ENCODE measurements at regions of chr2 and their contacts with region 1.

Region 1: GRCh38 chr2:30711646-30712085 is 95.6 kb downstream of the CAPN13 start:
- DNase-seq: peak; percentile 83 to 89 (median 89)
- H3K4me3 ChIP-seq: no peak overlapping the region
- H3K4me3 Mint-ChIP-seq: no peak overlapping the region
- H3K27ac ChIP-seq: no peak overlapping the region
- H3K27ac Mint-ChIP-seq: peak overlapping the region in 3 of 7 donors; percentile 8 to 60 (median 46)
- H3K4me1 ChIP-seq: peaks cover 35 to 37% of the 10 kb centered on the region in 2 donors
- H3K4me1 Mint-ChIP-seq: peaks cover 32% of the 10 kb centered on the region
- H3K27me3 ChIP-seq: no peaks in the 10 kb centered on the region
- H3K27me3 Mint-ChIP-seq: peaks cover 0 to 5% (median 2%) of the 10 kb centered on the region in 3 donors
- CTCF ChIP-seq: peak; percentile 100

Region 2: DNA sequence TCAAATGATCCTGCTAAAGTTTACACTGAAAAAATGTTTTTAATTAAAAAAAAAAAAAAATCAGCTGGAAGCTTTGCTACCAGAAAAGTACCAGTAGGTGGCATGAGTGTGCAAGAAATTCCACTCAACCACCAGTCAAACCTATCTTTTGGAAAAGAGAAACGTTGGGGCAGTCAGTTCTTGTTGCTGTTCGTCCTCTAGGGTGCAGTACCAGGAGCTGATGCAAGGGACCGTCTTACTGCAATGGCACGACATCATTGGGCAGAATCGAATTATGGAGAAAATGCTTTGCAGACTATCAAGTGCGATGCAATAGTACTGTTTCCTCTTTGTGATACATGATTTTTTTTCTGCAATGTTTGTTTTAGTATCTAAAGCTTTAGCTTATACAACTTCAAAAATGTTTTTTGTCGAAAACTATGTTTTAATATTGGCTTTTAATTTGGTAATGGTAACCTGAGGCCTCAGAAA is 546.6 kb before region 1 on chr2:
- intact Hi-C with region 1: loop called (anchors 5 kb)
- DNase-seq: peak; percentile 80 to 86 (median 86)
- H3K4me3 ChIP-seq: no peak overlapping the region
- H3K4me3 Mint-ChIP-seq: no peak overlapping the region
- H3K27ac ChIP-seq: no peak overlapping the region
- H3K27ac Mint-ChIP-seq: no peak overlapping the region
- H3K4me1 ChIP-seq: no peaks in the 10 kb centered on the region
- H3K4me1 Mint-ChIP-seq: peaks cover 5% of the 10 kb centered on the region
- H3K27me3 ChIP-seq: no peaks in the 10 kb centered on the region
- H3K27me3 Mint-ChIP-seq: peaks cover 0 to 2% (median 0%) of the 10 kb centered on the region in 3 donors
- CTCF ChIP-seq: peak; percentile 94

Region 3: GRCh38 chr2:30208452-30208851 is 503.2 kb before region 1 on chr2:
- intact Hi-C with region 1: loop called (anchors 5 kb)
- DNase-seq: peak; percentile 13 to 41 (median 37)
- H3K4me3 ChIP-seq: no peak overlapping the region
- H3K4me3 Mint-ChIP-seq: no peak overlapping the region
- H3K27ac ChIP-seq: no peak overlapping the region
- H3K27ac Mint-ChIP-seq: no peak overlapping the region
- H3K4me1 ChIP-seq: no peaks in the 10 kb centered on the region
- H3K4me1 Mint-ChIP-seq: peaks cover 2% of the 10 kb centered on the region
- H3K27me3 ChIP-seq: no peaks in the 10 kb centered on the region
- H3K27me3 Mint-ChIP-seq: peaks cover 0 to 7% (median 5%) of the 10 kb centered on the region in 3 donors
- CTCF ChIP-seq: peak; percentile 91

Region 4: GRCh38 chr2:30923575-30923974 is 211.9 kb after region 1 on chr2:
- intact Hi-C with region 1: no loop called
- DNase-seq: no peak
- H3K4me3 ChIP-seq: no peak overlapping the region
- H3K4me3 Mint-ChIP-seq: no peak overlapping the region
- H3K27ac ChIP-seq: no peak overlapping the region
- H3K27ac Mint-ChIP-seq: no peak overlapping the region
- H3K4me1 ChIP-seq: no peaks in the 10 kb centered on the region
- H3K4me1 Mint-ChIP-seq: no peaks in the 10 kb centered on the region
- H3K27me3 ChIP-seq: no peaks in the 10 kb centered on the region
- H3K27me3 Mint-ChIP-seq: peaks cover 0 to 2% (median 0%) of the 10 kb centered on the region in 3 donors
- CTCF ChIP-seq: no peak

Region 5: GRCh38 chr2:31170071-31170698 is 458.5 kb after region 1 on chr2:
- intact Hi-C with region 1: loop called (anchors 5 to 10 kb)
- DNase-seq: peak; percentile 48 to 68 (median 55)
- H3K4me3 ChIP-seq: no peak overlapping the region
- H3K4me3 Mint-ChIP-seq: no peak overlapping the region
- H3K27ac ChIP-seq: no peak overlapping the region
- H3K27ac Mint-ChIP-seq: no peak overlapping the region
- H3K4me1 ChIP-seq: peaks cover 0 to 5% of the 10 kb centered on the region in 2 donors
- H3K4me1 Mint-ChIP-seq: peaks cover 17% of the 10 kb centered on the region
- H3K27me3 ChIP-seq: no peaks in the 10 kb centered on the region
- H3K27me3 Mint-ChIP-seq: no peaks in the 10 kb centered on the region
- CTCF ChIP-seq: peak; percentile 88

Region 6: DNA sequence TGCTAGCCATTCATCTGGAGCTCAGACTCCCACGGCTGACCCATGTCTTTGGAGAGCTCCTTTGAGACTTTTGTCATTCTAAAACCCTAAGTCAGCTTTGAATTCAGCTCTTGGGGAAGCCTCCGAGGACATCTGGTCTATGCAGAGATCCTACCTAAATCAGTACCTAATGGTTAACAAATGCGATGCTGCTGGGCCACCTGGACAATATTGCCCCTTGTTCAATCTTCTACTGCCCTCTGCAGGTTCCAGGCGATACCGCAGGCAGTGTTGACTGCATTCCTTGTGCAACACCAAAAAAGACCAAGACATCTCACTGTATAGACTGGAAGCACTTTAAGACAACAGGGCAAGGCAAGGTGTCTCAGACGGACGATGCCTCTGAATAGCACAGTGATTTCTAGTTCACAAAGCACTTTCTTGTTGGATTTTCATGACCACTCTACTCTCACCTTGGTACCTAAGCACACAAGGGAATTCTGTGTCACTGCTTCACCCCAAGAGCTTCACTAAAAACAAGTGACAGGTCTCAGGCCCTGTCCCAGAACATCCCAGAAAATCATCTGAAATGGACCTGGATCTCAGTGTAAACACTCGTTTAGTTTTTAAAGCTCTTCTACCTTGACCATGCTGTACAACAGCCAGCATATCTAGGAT is 622.0 kb after region 1 on chr2:
- intact Hi-C with region 1: loop called (anchors 2 to 5 kb)
- DNase-seq: peak; percentile 60 to 69 (median 66)
- H3K4me3 ChIP-seq: no peak overlapping the region
- H3K4me3 Mint-ChIP-seq: peak overlapping the region in 1 of 2 donors; percentile 6
- H3K27ac ChIP-seq: no peak overlapping the region
- H3K27ac Mint-ChIP-seq: no peak overlapping the region
- H3K4me1 ChIP-seq: no peaks in the 10 kb centered on the region
- H3K4me1 Mint-ChIP-seq: no peaks in the 10 kb centered on the region
- H3K27me3 ChIP-seq: no peaks in the 10 kb centered on the region
- H3K27me3 Mint-ChIP-seq: peaks cover 0 to 2% (median 1%) of the 10 kb centered on the region in 3 donors
- CTCF ChIP-seq: peak; percentile 96

Region 7: DNA sequence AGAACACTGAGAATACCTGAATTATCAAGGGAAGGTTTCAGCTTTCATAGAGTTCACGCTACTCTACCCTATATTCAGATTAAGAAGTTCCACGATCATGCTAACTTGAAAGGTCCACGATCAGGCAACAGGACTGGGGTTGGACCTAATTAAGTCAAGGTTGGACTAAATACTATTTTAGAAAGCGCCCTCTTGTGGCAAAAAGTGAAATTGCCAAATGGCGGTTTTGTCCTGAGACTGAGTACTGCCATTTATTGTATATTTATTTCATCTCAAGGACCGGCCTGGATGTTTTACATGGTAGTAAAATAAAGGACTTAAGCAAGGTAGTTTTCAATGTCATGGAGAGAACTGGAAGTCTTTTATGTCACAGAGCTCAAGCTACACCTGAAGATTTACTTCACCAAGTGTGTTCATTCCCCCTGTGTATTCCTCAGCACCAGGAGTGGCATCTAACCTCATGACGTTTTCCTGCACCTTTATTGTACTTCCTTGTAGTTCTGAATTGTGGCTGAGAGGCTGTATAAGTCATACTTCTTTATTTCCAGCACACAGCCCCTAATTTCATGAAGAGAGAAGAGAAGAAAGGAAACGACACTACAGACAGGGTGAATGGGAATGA is 812.3 kb after region 1 on chr2:
- intact Hi-C with region 1: loop called (anchors 5 kb)
- DNase-seq: peak; percentile 9 to 47 (median 23)
- H3K4me3 ChIP-seq: no peak overlapping the region
- H3K4me3 Mint-ChIP-seq: no peak overlapping the region
- H3K27ac ChIP-seq: no peak overlapping the region
- H3K27ac Mint-ChIP-seq: no peak overlapping the region
- H3K4me1 ChIP-seq: no peaks in the 10 kb centered on the region
- H3K4me1 Mint-ChIP-seq: no peaks in the 10 kb centered on the region
- H3K27me3 ChIP-seq: no peaks in the 10 kb centered on the region
- H3K27me3 Mint-ChIP-seq: peaks cover 1 to 7% (median 4%) of the 10 kb centered on the region in 3 donors
- CTCF ChIP-seq: peak; percentile 85